HepG2 (cell line): ENCODE measurements at regions of chr15 and their contacts with region 1.

Region 1: DNA sequence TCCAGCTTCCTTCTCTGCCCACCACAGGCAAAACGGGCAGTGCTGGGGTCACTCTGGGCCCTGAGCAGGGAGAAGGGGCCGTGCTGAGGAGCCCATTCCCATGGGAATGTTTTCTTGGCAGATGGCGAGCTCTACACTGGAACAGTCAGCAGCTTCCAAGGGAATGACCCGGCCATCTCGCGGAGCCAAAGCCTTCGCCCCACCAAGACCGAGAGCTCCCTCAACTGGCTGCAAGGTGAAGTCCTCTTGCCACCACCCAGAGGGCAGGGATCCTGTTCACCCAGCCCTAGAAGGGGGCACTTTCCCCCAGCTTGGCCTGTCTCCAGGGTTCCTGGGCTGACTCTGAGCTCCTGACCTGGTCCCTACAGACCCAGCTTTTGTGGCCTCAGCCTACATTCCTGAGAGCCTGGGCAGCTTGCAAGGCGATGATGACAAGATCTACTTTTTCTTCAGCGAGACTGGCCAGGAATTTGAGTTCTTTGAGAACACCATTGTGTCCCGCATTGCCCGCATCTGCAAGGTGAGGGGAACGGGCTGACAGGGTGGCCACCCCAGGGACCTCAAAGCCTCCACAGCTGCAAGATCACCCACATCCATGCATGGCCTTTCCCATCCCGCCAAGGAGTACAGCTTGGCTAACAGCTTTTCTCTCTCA is 12.4 kb downstream of the CIB1 start:
- DNase-seq: peak; percentile 67
- ATAC-seq: peak; percentile 91
- H3K4me3 ChIP-seq: no peak overlapping the region
- H3K27ac ChIP-seq: no peak overlapping the region
- H3K4me1 ChIP-seq: no peaks in the 10 kb centered on the region
- H3K27me3 ChIP-seq: no peaks in the 10 kb centered on the region
- CTCF ChIP-seq: peak; percentile 94
- EP300 ChIP-seq: no peak
- POLR2A ChIP-seq: no peak
- RAD21 ChIP-seq: peak; percentile 93

Region 2: GRCh38 chr15:90101969-90102890 is 119.1 kb before region 1 on chr15 and contains the start of gene IDH2:
- CTCF ChIA-PET with region 1: no interaction called
- POLR2A ChIA-PET with region 1: no interaction called
- in situ Hi-C with region 1: no loop called
- intact Hi-C with region 1: no loop called
- DNase-seq: peak; percentile 48
- ATAC-seq: peak; percentile 92
- H3K4me3 ChIP-seq: peak within 1 kb of the TSS; percentile 76 to 84 (median 77)
- H3K27ac ChIP-seq: peak within 1 kb of the TSS; percentile 76
- H3K4me1 ChIP-seq: peaks cover 79% of the 10 kb centered on the region
- H3K27me3 ChIP-seq: peaks cover 0 to 1% of the 10 kb centered on the region in 2 experiments; a peak in 1 of 5 replicates
- CTCF ChIP-seq: no peak
- EP300 ChIP-seq: no peak
- POLR2A ChIP-seq: peak; percentile 80 to 96
- RAD21 ChIP-seq: 0 out of 2 replicates have a peak, but pooled peaks have one; percentile 15
- total RNA-seq, gene IDH2: 120 and 121 TPM in 2 replicates

Region 3: GRCh38 chr15:90143166-90143655 is 78.2 kb before region 1 on chr15:
- CTCF ChIA-PET with region 1: interaction called, 41 read pairs
- POLR2A ChIA-PET with region 1: no interaction called
- in situ Hi-C with region 1: no loop called
- intact Hi-C with region 1: loop called (anchors 1 kb)
- DNase-seq: no peak
- ATAC-seq: peak; percentile 94
- H3K4me3 ChIP-seq: peak overlapping the region; percentile 19 to 70 (median 24); a peak in 4 of 6 replicates
- H3K27ac ChIP-seq: no peak overlapping the region
- H3K4me1 ChIP-seq: peaks cover 47% of the 10 kb centered on the region
- H3K27me3 ChIP-seq: peaks cover 2 to 19% of the 10 kb centered on the region in 2 experiments; a peak in 4 of 5 replicates
- CTCF ChIP-seq: peak; percentile 94
- EP300 ChIP-seq: no peak
- POLR2A ChIP-seq: no peak
- RAD21 ChIP-seq: peak; percentile 93

Region 4: DNA sequence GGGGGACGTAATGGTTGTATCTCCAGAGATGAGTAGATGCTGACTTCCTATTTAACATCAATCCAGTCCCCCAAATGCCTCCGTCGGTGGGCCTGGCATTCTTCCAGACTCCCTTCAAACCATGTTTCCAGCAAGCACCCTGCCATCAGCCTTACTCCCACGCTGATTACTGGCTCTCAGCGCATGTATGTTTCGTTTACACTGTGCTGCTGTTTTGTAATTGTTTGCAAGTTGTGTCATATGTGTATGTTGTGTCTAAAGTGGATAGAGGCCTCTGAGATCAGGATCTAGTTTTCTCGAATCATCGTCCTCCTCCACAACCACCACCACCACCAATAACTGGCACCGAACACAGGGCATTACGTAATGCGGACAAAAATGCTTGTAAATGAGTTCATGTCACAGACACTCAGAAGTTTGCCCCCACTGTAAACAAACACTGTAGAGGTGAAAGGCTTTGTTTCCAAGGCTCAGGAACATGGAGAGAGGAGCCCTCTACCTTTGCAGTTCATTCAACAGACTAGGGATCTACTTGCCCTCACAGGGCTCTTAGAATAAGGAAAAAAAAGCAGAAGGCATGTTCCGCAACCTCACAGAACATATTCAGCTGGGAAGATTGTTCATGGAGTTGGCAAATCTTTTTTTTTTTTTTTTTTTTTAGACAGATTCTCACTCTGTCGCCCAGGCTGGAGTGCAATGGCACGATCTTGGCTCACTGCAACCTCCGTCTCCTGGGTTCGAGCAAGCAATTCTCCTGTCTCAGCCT is 66.3 kb before region 1 on chr15:
- CTCF ChIA-PET with region 1: no interaction called
- POLR2A ChIA-PET with region 1: no interaction called
- in situ Hi-C with region 1: no loop called
- intact Hi-C with region 1: no loop called
- DNase-seq: peak; percentile 80
- ATAC-seq: peak; percentile 15; the same call in 1 of the 3 replicates
- H3K4me3 ChIP-seq: peak overlapping the region in 1 of 3 experiments; percentile 7; a peak in 1 of 6 replicates
- H3K27ac ChIP-seq: no peak overlapping the region
- H3K4me1 ChIP-seq: peaks cover 69% of the 10 kb centered on the region
- H3K27me3 ChIP-seq: no peaks in the 10 kb centered on the region
- CTCF ChIP-seq: peak; percentile 30; the same call in 1 of the 2 replicates
- EP300 ChIP-seq: no peak; a peak in 1 of 4 replicates
- POLR2A ChIP-seq: no peak
- RAD21 ChIP-seq: no peak

Region 5: DNA sequence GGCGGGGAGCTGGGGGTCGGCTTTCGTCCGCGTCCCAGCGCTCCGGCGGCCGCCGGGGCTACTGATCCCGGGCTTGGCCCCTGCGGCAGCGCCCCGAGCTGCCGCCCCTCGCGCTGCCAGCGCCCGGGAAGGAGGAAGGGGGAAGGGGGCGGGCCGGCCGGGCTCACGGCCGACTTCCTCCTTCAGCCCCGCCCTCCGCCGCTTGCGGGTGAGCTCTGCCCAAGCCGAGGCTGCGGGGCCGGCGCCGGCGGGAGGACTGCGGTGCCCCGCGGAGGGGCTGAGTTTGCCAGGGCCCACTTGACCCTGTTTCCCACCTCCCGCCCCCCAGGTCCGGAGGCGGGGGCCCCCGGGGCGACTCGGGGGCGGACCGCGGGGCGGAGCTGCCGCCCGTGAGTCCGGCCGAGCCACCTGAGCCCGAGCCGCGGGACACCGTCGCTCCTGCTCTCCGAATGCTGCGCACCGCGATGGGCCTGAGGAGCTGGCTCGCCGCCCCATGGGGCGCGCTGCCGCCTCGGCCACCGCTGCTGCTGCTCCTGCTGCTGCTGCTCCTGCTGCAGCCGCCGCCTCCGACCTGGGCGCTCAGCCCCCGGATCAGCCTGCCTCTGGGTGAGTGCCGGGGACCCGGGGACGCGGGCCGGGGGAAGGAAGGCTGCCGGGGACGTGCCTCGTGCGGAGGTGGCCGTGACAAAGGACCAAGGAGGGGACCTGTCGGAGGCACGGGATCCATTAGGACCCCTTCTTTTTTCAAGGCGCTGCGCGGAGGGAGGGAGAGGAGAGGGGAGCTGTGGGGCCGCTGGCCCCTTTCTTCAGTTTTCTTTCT is 20.0 kb before region 1 on chr15 and contains the start of gene SEMA4B:
- CTCF ChIA-PET with region 1: interaction called, 3 read pairs
- POLR2A ChIA-PET with region 1: interaction called, 3 read pairs
- in situ Hi-C with region 1: no loop called
- intact Hi-C with region 1: loop called (anchors 2 kb)
- DNase-seq: peak; percentile 36
- ATAC-seq: peak; percentile 89
- H3K4me3 ChIP-seq: peak within 1 kb of the TSS; percentile 85 to 95 (median 95)
- H3K27ac ChIP-seq: peak within 1 kb of the TSS; percentile 30
- H3K4me1 ChIP-seq: peaks cover 26% of the 10 kb centered on the region
- H3K27me3 ChIP-seq: no peaks in the 10 kb centered on the region
- CTCF ChIP-seq: no peak
- EP300 ChIP-seq: no peak
- POLR2A ChIP-seq: peak in 1 of 2 experiments; percentile 73; a peak in 3 of 4 replicates
- RAD21 ChIP-seq: no peak
- total RNA-seq, gene SEMA4B: 1.3 and 2.1 TPM in 2 replicates